RWPE1 (cell line): ENCODE measurements at regions of chr17 and their contacts with region 1.

Region 1: GRCh38 chr17:50094753-50095619 is at the start of gene PDK2:
- DNase-seq: peak; percentile 96
- H3K27ac ChIP-seq: peak within 1 kb of the TSS; percentile 85
- CTCF ChIP-seq: no peak

Region 2: GRCh38 chr17:50151041-50151936 is 56.3 kb after region 1 on chr17:
- CTCF ChIA-PET with region 1: interaction called, 10 read pairs
- POLR2A ChIA-PET with region 1: no interaction called
- DNase-seq: peak; percentile 91
- H3K27ac ChIP-seq: peak overlapping the region; percentile 98
- CTCF ChIP-seq: peak; percentile 71

Region 3: GRCh38 chr17:50161023-50161910 is 66.3 kb after region 1 on chr17:
- CTCF ChIA-PET with region 1: interaction called, 20 read pairs
- POLR2A ChIA-PET with region 1: no interaction called
- DNase-seq: peak; percentile 99
- H3K27ac ChIP-seq: peak overlapping the region; percentile 69
- CTCF ChIP-seq: peak; percentile 98